Activated CD4-positive, alpha-beta memory T cell treated with anti-CD3 and anti-CD28 coated beads, Interleukin-2, amount 10 ng/mL, durations not matched to agents 7 days and 5 days (primary cell): ENCODE measurements at regions of chr3 and their contacts with region 1.

Region 1: GRCh38 chr3:143001369-143002082 is at the start of gene U2SURP:
- DNase-seq: peak; percentile 94
- H3K4me3 Mint-ChIP-seq: peak within 1 kb of the TSS; percentile 96
- H3K27ac Mint-ChIP-seq: peak within 1 kb of the TSS; percentile 96
- H3K4me1 Mint-ChIP-seq: peaks cover 44% of the 10 kb centered on the region
- H3K27me3 Mint-ChIP-seq: peaks cover under 1% of the 10 kb centered on the region
- total RNA-seq, gene U2SURP: 106 to 120 TPM

Region 2: DNA sequence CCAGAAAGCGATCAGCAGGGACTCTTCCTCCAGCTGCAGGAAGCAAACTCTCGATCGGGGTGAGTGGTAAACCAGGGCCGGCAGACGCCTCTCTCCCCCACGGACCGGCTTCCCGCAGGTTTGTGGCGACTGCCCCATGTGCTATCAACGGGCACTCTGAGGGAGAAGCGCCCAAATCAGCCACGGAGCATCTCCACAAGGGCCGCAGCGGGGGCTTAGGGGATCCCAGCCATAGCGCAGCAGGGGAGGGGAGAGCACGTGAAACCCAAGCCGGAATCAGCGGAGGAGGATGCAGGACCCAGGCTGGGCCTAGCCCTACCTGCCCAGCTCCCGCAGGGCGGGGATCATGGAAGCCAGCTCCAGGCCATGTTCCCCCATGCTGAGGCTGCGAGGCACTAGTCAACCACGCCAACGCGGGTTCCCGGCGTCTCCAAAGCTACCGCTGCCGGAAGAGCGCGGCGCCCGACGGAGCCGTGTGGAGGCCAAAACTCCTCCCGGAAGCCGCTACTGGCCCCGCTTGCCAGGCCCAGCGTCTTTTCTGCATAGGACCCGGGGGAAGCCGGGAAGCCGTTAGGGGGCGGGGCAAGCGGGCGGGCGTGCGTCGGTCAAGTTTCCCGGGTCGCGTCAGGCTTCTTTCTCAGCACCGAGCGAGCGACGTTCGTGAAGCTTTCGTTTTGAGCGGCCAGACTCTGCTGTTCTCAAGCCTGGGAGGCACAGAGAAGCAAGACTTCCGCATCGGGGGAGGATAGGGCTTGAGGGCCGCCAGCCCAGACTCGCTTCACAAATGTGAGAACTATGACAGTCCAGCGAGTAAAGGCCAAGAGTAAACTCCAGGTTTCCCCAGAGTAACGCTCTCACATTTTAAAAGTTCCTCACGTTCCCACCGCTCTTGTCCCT is 423.0 kb before region 1 on chr3 and contains the start of gene ATR:
- CTCF ChIA-PET with region 1: interaction called, 3 read pairs
- POLR2A ChIA-PET with region 1: interaction called, 43 read pairs
- DNase-seq: peak; percentile 98
- H3K4me3 Mint-ChIP-seq: peak within 1 kb of the TSS; percentile 98
- H3K27ac Mint-ChIP-seq: peak within 1 kb of the TSS; percentile 95
- H3K4me1 Mint-ChIP-seq: peaks cover 45% of the 10 kb centered on the region
- H3K27me3 Mint-ChIP-seq: peaks cover 11% of the 10 kb centered on the region
- total RNA-seq, gene ATR: 24.5 to 24.7 TPM

Region 3: DNA sequence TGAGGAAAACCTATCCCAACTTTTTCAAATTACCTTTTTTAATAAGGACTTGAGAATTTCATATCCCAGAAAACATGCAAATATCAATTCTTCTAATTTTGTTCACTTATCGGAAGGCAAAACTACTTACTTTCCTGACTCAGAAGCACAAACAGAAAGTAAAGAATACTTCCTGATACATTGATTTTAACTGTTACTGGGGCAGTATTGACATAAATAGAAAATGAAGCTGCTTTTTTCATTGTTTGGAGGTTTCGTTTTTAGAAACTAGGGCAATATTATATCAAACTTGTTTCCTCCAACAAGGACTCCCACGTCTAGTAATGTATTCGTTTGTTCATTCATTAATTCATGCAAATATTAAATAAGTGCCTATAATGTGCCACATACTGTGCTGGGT is 57.2 kb before region 1 on chr3:
- CTCF ChIA-PET with region 1: no interaction called
- POLR2A ChIA-PET with region 1: interaction called, 32 read pairs
- DNase-seq: no peak
- H3K4me3 Mint-ChIP-seq: peak overlapping the region; percentile 64
- H3K27ac Mint-ChIP-seq: peak overlapping the region; percentile 61
- H3K4me1 Mint-ChIP-seq: peaks cover 26% of the 10 kb centered on the region
- H3K27me3 Mint-ChIP-seq: peaks cover 8% of the 10 kb centered on the region

Region 4: GRCh38 chr3:143031327-143031726 is 29.8 kb after region 1 on chr3:
- CTCF ChIA-PET with region 1: interaction called, 3 read pairs
- POLR2A ChIA-PET with region 1: interaction called, 12 read pairs
- DNase-seq: no peak
- H3K4me3 Mint-ChIP-seq: no peak overlapping the region
- H3K27ac Mint-ChIP-seq: no peak overlapping the region
- H3K4me1 Mint-ChIP-seq: peaks cover 7% of the 10 kb centered on the region
- H3K27me3 Mint-ChIP-seq: no peaks in the 10 kb centered on the region

Region 5: DNA sequence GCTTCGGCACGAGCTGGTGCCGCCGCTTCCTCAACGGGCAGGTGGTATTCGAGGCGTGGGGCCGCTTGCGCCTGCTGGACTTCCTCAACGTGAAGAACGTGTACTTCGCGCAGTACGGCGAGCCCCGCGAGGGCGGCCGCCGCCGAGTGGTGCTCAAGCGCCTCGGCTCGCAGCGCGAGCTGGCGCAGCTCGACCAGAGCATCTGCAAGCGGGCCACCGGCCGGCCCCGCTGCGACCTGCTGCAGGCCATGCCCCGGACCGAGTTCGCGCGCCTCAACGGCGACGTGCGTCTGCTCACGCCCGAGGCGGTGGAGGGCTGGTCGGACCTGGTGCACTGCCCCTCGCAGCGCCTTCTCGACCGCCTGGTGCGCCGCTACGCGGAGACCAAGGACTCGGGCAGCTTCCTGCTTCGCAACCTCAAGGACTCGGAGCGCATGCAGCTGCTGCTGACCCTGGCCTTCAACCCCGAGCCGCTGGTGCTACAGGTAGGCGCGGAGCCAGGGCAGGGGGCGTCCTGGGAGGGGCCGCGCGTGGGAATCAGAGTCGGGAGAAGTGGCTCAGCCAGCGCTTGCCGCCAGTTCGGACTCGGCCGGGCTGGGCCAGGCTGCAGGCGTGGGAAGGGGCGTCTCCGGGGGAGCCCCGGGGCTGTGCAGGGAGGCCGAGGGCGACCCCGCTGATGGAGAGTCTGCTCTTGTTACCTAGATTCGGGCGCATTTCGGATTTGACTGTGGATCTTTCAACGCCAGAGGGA is 971.2 kb after region 1 on chr3:
- CTCF ChIA-PET with region 1: interaction called, 7 read pairs
- POLR2A ChIA-PET with region 1: interaction called, 15 read pairs
- DNase-seq: peak; percentile 74
- H3K4me3 Mint-ChIP-seq: peak overlapping the region; percentile 93
- H3K27ac Mint-ChIP-seq: peak overlapping the region; percentile 90
- H3K4me1 Mint-ChIP-seq: peaks cover 38% of the 10 kb centered on the region
- H3K27me3 Mint-ChIP-seq: peaks cover 17% of the 10 kb centered on the region